Activated naive CD4-positive, alpha-beta T cell treated with anti-CD3 and anti-CD28 coated beads for 36 hours (primary cell): ENCODE measurements at regions of chr2 and their contacts with region 1.

Region 1: GRCh38 chr2:157628477-157629415 is at the start of gene ACVR1C:
- DNase-seq: peak; percentile 83
- H3K4me3 Mint-ChIP-seq: peak within 1 kb of the TSS; percentile 94
- H3K27ac Mint-ChIP-seq: no peak within 1 kb of the TSS
- H3K4me1 Mint-ChIP-seq: peaks cover 37% of the 10 kb centered on the region
- H3K27me3 Mint-ChIP-seq: peaks cover 2% of the 10 kb centered on the region
- total RNA-seq, gene ACVR1C: 3.5 to 3.6 TPM

Region 2: DNA sequence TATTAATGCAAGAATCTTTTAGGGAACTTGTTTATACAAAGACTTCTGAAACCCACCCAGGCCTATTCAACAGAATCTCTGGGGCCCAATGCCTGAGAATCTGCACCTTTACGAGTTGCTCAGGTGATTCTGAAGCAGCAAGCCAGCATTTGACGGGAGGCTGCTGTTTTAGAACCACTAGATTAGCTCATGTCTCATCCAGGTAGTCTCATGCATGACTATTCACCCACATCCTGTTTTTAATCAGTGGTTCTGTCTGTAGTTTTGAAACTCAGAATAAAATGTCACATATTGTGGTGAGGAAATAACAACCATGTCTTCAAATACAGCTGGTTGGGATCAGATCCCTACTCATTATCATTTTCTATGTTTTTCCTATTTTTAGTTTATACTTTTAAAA is 224.4 kb before region 1 on chr2:
- CTCF ChIA-PET with region 1: no interaction called
- intact Hi-C with region 1: loop called (anchors 5 kb)
- DNase-seq: peak; percentile 80
- H3K4me3 Mint-ChIP-seq: no peak overlapping the region
- H3K27ac Mint-ChIP-seq: peak overlapping the region; percentile 72
- H3K4me1 Mint-ChIP-seq: peaks cover 76% of the 10 kb centered on the region
- H3K27me3 Mint-ChIP-seq: no peaks in the 10 kb centered on the region

Region 3: DNA sequence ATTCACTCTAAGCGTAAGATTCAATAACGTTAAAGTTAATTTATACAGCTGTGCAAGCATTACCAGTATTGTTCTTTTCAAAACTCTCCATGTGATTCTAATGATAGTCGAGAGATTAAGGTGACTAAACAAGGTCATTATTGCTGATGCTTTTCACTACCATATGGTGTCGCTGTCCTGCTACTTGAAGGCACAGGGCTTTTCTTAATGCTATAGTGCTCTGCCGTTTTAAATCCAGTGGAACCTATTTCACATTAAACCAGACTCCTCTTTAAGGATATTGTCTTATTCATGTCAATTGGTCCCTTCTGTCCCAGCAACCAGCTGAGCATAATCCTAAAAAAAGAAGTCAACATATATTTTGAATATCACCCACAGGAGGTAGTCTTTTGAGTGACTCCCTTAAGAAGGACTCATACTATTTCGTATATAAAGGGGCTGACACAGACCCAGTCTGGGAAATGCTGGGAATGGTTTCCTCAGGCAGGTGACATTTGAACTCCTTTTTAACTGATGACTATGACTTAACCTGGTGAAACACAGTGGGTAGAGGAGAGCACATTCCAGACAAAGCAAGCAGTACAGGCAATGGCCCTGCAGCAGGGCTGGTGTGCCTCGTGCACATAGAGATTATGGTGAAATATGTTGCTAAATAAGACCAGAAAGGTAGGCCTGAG is 131.0 kb before region 1 on chr2:
- CTCF ChIA-PET with region 1: interaction called, 18 read pairs
- intact Hi-C with region 1: loop called (anchors 1 kb)
- DNase-seq: peak; percentile 25
- H3K4me3 Mint-ChIP-seq: no peak overlapping the region
- H3K27ac Mint-ChIP-seq: no peak overlapping the region
- H3K4me1 Mint-ChIP-seq: peaks cover 23% of the 10 kb centered on the region
- H3K27me3 Mint-ChIP-seq: no peaks in the 10 kb centered on the region

Region 4: DNA sequence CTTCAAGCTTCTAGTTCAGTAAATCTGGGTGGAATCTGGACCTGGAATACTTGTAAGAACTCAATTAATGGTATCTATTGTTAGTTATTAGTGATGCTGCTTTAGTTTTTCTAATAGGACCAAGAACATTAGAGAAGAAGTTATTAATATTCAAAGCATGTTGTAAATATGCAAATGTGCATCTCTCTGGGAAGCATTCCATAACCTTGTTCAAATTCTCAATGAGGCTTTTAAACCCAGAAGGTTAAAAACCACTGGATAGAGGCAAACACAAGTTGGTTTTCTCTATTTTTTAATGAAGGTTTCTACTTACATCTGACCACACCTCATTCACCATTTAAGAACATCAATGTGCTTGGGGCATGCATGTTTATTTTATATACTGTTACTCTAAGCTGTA is 16.0 kb after region 1 on chr2:
- CTCF ChIA-PET with region 1: interaction called, 13 read pairs
- intact Hi-C with region 1: no loop called
- DNase-seq: no peak
- H3K4me3 Mint-ChIP-seq: no peak overlapping the region
- H3K27ac Mint-ChIP-seq: no peak overlapping the region
- H3K4me1 Mint-ChIP-seq: no peaks in the 10 kb centered on the region
- H3K27me3 Mint-ChIP-seq: no peaks in the 10 kb centered on the region

Region 5: GRCh38 chr2:158191076-158191895 is 562.5 kb after region 1 on chr2:
- CTCF ChIA-PET with region 1: no interaction called
- intact Hi-C with region 1: loop called (anchors 2 kb)
- DNase-seq: peak; percentile 66
- H3K4me3 Mint-ChIP-seq: no peak overlapping the region
- H3K27ac Mint-ChIP-seq: peak overlapping the region; percentile 32
- H3K4me1 Mint-ChIP-seq: peaks cover 25% of the 10 kb centered on the region
- H3K27me3 Mint-ChIP-seq: peaks cover 29% of the 10 kb centered on the region